GM13976 (cell line): ENCODE measurements at regions of chr2 and their contacts with region 1.

Region 1: GRCh38 chr2:28751252-28751955 is at the start of gene PPP1CB:
- DNase-seq: peak; percentile 93
- CTCF ChIP-seq: peak; percentile 42

Region 2: DNA sequence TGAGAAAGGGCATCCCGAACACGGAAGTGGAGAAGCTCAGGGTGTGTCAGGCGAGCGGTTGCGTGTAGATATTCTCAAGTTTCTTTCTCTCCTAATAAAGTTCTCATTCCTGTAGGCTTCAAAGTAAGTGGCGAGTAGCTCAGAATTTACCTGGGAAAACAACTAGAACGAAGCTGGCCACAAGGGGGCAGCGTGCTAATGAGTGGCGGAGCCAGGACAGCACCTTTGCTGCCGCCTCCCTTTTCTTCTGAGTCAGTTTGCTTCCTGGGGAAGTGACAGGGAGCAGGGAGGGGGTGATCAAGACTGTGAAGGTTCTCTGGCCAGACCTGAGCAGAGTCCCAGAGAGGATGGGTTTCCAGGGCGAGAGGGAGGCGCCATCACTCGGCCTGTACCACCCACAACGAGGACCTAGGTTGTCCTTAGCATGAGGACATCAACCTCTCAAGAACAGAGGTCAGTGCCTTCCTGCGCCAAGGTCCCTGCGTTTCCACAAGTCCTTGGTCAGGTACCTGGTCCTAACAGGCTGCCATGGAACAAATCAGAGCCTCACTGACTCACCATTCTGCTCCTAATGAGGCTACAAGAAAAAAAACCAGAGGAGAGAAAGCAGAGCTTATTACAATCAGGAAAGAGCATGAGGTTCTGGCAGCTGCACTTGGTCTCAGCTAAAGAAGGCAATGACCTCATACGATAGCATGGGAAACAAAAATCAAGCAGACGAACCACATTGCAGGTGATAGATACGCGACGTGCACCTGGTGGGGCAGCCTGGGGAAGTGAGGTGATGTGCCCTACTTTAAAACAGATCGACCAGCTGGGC is 156.9 kb before region 1 on chr2:
- in situ Hi-C with region 1: loop called (anchors 10 kb)
- DNase-seq: peak; percentile 82
- CTCF ChIP-seq: peak; percentile 81